Activated CD8-positive, alpha-beta T cell treated with anti-CD3 and anti-CD28 coated beads for 36 hours (primary cell): ENCODE measurements at regions of chr3 and their contacts with region 1.

Region 1: GRCh38 chr3:151918253-151919029 is 45.0 kb downstream of the SUCNR1 start:
- DNase-seq: no peak
- ATAC-seq: peak; percentile 55
- H3K4me3 Mint-ChIP-seq: no peak overlapping the region
- H3K27ac Mint-ChIP-seq: no peak overlapping the region
- H3K4me1 Mint-ChIP-seq: peaks cover 3% of the 10 kb centered on the region
- H3K27me3 Mint-ChIP-seq: no peaks in the 10 kb centered on the region
- CTCF ChIP-seq: peak; percentile 73

Region 2: DNA sequence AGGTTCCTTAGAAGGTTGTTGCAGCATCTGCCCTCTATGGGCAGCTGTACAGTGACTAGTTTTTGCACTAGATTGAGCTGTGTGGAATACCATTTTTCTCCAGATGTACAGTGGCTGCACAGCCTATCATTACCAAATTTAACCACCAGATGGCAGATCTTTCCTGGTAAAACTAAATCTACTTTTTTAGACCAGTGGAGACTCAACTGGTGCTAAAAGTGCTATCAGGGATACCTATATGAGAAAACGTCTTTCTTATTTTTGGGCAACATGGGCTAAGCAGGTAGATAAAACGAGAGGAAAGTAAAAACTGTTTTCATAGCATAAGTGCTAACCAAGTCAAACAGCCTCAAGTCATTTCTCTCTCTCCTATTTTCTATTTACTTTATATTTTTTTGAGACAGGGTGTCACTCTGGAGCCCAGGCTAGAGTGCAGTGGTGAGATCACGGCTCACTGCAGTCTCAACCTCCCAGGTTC is 478.8 kb before region 1 on chr3:
- CTCF ChIA-PET with region 1: interaction called, 17 read pairs
- POLR2A ChIA-PET with region 1: no interaction called
- intact Hi-C with region 1: no loop called
- DNase-seq: peak; percentile 17
- ATAC-seq: peak; percentile 66
- H3K4me3 Mint-ChIP-seq: no peak overlapping the region
- H3K27ac Mint-ChIP-seq: no peak overlapping the region
- H3K4me1 Mint-ChIP-seq: no peaks in the 10 kb centered on the region
- H3K27me3 Mint-ChIP-seq: no peaks in the 10 kb centered on the region
- CTCF ChIP-seq: peak; percentile 64

Region 3: GRCh38 chr3:151468284-151468917 is 450.0 kb before region 1 on chr3:
- CTCF ChIA-PET with region 1: interaction called, 22 read pairs
- POLR2A ChIA-PET with region 1: no interaction called
- intact Hi-C with region 1: loop called (anchors 5 kb)
- DNase-seq: peak; percentile 39
- ATAC-seq: peak; percentile 69
- H3K4me3 Mint-ChIP-seq: no peak overlapping the region
- H3K27ac Mint-ChIP-seq: no peak overlapping the region
- H3K4me1 Mint-ChIP-seq: no peaks in the 10 kb centered on the region
- H3K27me3 Mint-ChIP-seq: no peaks in the 10 kb centered on the region
- CTCF ChIP-seq: peak; percentile 75

Region 4: GRCh38 chr3:151864423-151865101 is 53.9 kb before region 1 on chr3:
- CTCF ChIA-PET with region 1: no interaction called
- POLR2A ChIA-PET with region 1: no interaction called
- intact Hi-C with region 1: no loop called
- DNase-seq: no peak
- ATAC-seq: no peak
- H3K4me3 Mint-ChIP-seq: no peak overlapping the region
- H3K27ac Mint-ChIP-seq: no peak overlapping the region
- H3K4me1 Mint-ChIP-seq: no peaks in the 10 kb centered on the region
- H3K27me3 Mint-ChIP-seq: no peaks in the 10 kb centered on the region
- CTCF ChIP-seq: no peak